Calu3 (cell line): ENCODE measurements at regions of chr7 and their contacts with region 1.

Region 1: DNA sequence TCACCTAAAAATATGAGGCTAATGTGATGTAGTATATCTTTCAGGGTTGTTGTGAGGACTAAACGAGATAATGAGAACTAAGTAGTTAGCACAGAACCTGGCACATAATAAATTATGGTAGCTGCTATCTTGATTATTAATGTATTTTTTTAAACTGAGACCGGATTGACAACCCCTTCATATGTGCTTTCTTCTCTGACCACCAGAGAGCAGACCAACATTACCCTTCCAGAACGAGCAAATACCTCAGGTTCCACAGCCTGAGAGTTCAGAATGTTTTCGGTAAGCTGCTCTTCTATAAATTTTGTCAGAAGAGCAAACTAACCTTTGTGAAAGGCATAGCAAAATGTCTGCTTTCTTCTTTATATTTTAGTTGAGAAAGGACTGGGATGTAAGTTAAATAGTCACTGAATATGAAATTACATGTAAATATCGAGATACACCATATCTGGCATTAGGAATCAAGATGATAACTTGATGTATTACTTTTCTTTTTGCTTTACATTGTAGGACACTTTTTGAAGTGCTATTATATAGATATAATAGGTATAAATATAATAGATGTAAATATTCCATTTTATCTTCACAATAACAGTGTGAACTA is 13.6 kb upstream of the BPGM start:
- DNase-seq: peak; percentile 44
- H3K4me3 Mint-ChIP-seq: no peak overlapping the region
- H3K27ac Mint-ChIP-seq: no peak overlapping the region
- H3K4me1 Mint-ChIP-seq: peaks cover 22% of the 10 kb centered on the region
- H3K27me3 Mint-ChIP-seq: peaks cover 2% of the 10 kb centered on the region
- CTCF ChIP-seq: peak; percentile 55

Region 2: GRCh38 chr7:133912916-133913697 is 719.9 kb before region 1 on chr7:
- CTCF ChIA-PET with region 1: no interaction called
- intact Hi-C with region 1: no loop called
- DNase-seq: no peak
- H3K4me3 Mint-ChIP-seq: no peak overlapping the region
- H3K27ac Mint-ChIP-seq: no peak overlapping the region
- H3K4me1 Mint-ChIP-seq: no peaks in the 10 kb centered on the region
- H3K27me3 Mint-ChIP-seq: no peaks in the 10 kb centered on the region
- CTCF ChIP-seq: no peak

Region 3: GRCh38 chr7:134420424-134421125 is 212.5 kb before region 1 on chr7:
- CTCF ChIA-PET with region 1: no interaction called
- intact Hi-C with region 1: no loop called
- DNase-seq: peak; percentile 77
- H3K4me3 Mint-ChIP-seq: peak overlapping the region; percentile 29
- H3K27ac Mint-ChIP-seq: peak overlapping the region; percentile 2
- H3K4me1 Mint-ChIP-seq: peaks cover 34% of the 10 kb centered on the region
- H3K27me3 Mint-ChIP-seq: no peaks in the 10 kb centered on the region
- CTCF ChIP-seq: peak; percentile 58

Region 4: GRCh38 chr7:134686786-134687185 is 53.7 kb after region 1 on chr7:
- CTCF ChIA-PET with region 1: interaction called, 5 read pairs
- intact Hi-C with region 1: loop called (anchors 5 kb)
- DNase-seq: no peak
- H3K4me3 Mint-ChIP-seq: no peak overlapping the region
- H3K27ac Mint-ChIP-seq: no peak overlapping the region
- H3K4me1 Mint-ChIP-seq: no peaks in the 10 kb centered on the region
- H3K27me3 Mint-ChIP-seq: peaks cover 7% of the 10 kb centered on the region
- CTCF ChIP-seq: peak; percentile 32

Region 5: GRCh38 chr7:134755401-134756022 is 122.5 kb after region 1 on chr7:
- CTCF ChIA-PET with region 1: no interaction called
- intact Hi-C with region 1: loop called (anchors 1 kb)
- DNase-seq: peak; percentile 36
- H3K4me3 Mint-ChIP-seq: no peak overlapping the region
- H3K27ac Mint-ChIP-seq: no peak overlapping the region
- H3K4me1 Mint-ChIP-seq: no peaks in the 10 kb centered on the region
- H3K27me3 Mint-ChIP-seq: peaks cover 19% of the 10 kb centered on the region
- CTCF ChIP-seq: no peak

Region 6: GRCh38 chr7:134943764-134944400 is 310.8 kb after region 1 on chr7:
- CTCF ChIA-PET with region 1: interaction called, 10 read pairs
- intact Hi-C with region 1: loop called (anchors 1 kb)
- DNase-seq: peak; percentile 13
- H3K4me3 Mint-ChIP-seq: no peak overlapping the region
- H3K27ac Mint-ChIP-seq: no peak overlapping the region
- H3K4me1 Mint-ChIP-seq: peaks cover 16% of the 10 kb centered on the region
- H3K27me3 Mint-ChIP-seq: no peaks in the 10 kb centered on the region
- CTCF ChIP-seq: no peak